Right cardiac atrium (tissue), 5 donors: ENCODE measurements at regions of chr20 and their contacts with region 1.

Region 1: DNA sequence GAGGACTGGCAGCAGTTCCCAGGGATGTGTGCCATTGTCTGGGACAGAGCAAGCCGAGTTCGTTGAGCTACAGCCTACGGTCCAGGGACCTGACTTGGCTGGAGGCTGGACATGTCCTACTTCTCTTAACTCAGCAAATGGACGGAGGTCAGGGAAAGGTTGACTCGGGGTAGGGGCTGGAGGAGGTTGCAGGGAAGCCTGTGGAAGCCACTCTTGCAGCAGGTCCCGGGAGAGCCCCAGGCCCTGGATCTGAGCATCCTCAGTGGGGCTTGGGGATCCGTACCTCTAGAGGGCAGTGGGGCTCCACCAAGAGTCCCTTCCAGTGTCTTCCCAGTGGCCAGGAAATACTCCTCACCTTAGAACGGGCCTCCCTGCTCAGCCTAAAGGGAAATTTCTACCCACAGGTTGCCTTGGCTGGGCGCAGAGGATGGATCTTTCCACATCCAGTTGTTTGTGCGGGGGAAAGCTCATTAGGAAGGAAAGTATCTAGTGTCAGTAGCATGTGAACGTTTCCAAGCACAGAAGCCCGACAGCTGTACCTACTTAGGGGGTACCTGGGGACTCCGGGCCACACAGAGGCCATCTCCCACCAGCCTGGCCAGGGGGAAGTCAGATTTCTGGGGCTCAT is 170.2 kb downstream of the NFATC2 start:
- DNase-seq: peak; percentile 65 to 88 (median 81)
- ATAC-seq: peak; percentile 82 to 89
- H3K4me3 ChIP-seq: no peak overlapping the region
- H3K27ac ChIP-seq: no peak overlapping the region
- H3K4me1 ChIP-seq: peaks cover 6% of the 10 kb centered on the region
- H3K27me3 ChIP-seq: no peaks in the 10 kb centered on the region

Region 2: GRCh38 chr20:51595058-51595532 is 222.8 kb after region 1 on chr20:
- intact Hi-C with region 1: loop called (anchors 2 to 5 kb)
- DNase-seq: peak; percentile 89 to 95 (median 93)
- ATAC-seq: peak; percentile 95 to 97
- H3K4me3 ChIP-seq: no peak overlapping the region
- H3K27ac ChIP-seq: no peak overlapping the region
- H3K4me1 ChIP-seq: no peaks in the 10 kb centered on the region
- H3K27me3 ChIP-seq: no peaks in the 10 kb centered on the region

Region 3: GRCh38 chr20:51624157-51624731 is 252.0 kb after region 1 on chr20:
- intact Hi-C with region 1: loop called in 1 of 4 experiments (anchors 10 kb)
- DNase-seq: peak; percentile 58 to 83 (median 81)
- ATAC-seq: peak in 1 of 2 donors; percentile 43
- H3K4me3 ChIP-seq: no peak overlapping the region
- H3K27ac ChIP-seq: no peak overlapping the region
- H3K4me1 ChIP-seq: peaks cover 3% of the 10 kb centered on the region
- H3K27me3 ChIP-seq: no peaks in the 10 kb centered on the region